CD14-positive monocyte (primary cell): ENCODE measurements at regions of chr6 and their contacts with region 1.

Region 1: DNA sequence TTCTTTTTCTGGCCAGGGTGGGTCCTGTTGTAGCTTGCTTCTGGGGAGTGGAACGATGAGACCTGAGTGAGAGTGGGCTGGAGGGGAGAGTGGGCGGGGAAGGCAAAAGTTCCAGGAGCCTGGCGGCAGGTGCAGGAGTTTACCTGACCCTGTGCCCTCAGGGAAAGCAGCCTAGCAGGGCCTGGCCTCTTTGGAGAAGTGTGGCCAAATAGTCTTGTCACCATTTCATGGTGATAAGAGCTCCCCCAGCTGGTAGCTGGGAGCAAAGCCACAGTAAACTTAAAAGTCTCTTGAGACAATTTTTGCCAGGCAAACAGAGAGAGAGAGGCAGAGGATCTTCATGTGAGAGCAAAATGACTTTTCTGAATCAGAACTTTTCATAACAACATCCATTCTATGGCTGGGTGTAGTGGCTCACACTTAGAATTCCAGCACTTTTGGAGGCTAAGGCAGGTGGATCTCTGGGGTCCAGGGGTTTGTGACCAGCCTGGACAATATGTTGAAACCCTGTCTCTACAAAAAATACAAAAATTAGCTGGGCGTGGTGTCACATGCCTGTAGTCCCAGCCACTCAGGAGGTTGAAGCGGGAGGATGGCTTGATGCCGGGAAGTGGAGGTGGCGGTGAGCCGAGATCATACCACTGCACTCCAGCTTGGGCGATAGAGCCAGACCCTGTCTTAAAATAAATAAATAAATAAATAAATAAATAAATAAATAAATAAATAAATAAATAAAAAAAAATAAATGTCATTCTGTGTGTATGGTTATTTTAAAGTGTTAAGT is 161.8 kb upstream of the SCGN start:
- DNase-seq: peak; percentile 71 to 83 (median 71)
- H3K4me3 ChIP-seq: no peak overlapping the region
- H3K4me3 Mint-ChIP-seq: no peak overlapping the region
- H3K27ac ChIP-seq: no peak overlapping the region
- H3K27ac Mint-ChIP-seq: peak overlapping the region in 5 of 7 donors; percentile 47 to 68 (median 58)
- H3K4me1 ChIP-seq: peaks cover 4 to 8% of the 10 kb centered on the region in 2 donors
- H3K4me1 Mint-ChIP-seq: peaks cover 12% of the 10 kb centered on the region
- H3K27me3 ChIP-seq: no peaks in the 10 kb centered on the region
- H3K27me3 Mint-ChIP-seq: no peaks in the 10 kb centered on the region
- CTCF ChIP-seq: peak; percentile 83

Region 2: DNA sequence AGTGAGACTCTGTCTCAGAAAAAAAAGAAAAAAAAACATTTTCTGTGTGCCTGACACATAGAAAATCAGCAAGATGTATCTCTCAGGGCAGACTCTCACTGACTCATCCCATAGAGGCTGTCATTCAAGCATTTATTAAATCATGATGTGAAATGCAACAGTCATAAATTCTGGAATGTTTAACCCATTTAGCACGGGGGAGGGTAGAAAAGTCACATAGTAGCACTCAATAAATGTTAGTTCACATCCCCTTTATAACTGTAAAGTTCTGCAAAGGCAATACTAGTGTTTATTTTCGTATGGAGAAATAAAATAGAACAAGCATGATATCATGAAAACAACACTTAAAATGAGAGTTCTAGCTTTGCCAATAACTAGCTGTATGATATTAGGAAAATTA is 226.6 kb before region 1 on chr6:
- intact Hi-C with region 1: loop called in 1 of 2 experiments (anchors 2 kb)
- DNase-seq: no peak
- H3K4me3 ChIP-seq: no peak overlapping the region
- H3K4me3 Mint-ChIP-seq: no peak overlapping the region
- H3K27ac ChIP-seq: no peak overlapping the region
- H3K27ac Mint-ChIP-seq: no peak overlapping the region
- H3K4me1 ChIP-seq: peaks cover 0 to 9% of the 10 kb centered on the region in 2 donors
- H3K4me1 Mint-ChIP-seq: peaks cover 1% of the 10 kb centered on the region
- H3K27me3 ChIP-seq: no peaks in the 10 kb centered on the region
- H3K27me3 Mint-ChIP-seq: peaks cover 0 to 2% (median 2%) of the 10 kb centered on the region in 3 donors
- CTCF ChIP-seq: no peak

Region 3: GRCh38 chr6:25270559-25270958 is 219.7 kb before region 1 on chr6:
- intact Hi-C with region 1: loop called (anchors 2 to 5 kb)
- DNase-seq: no peak
- H3K4me3 ChIP-seq: no peak overlapping the region
- H3K4me3 Mint-ChIP-seq: no peak overlapping the region
- H3K27ac ChIP-seq: no peak overlapping the region
- H3K27ac Mint-ChIP-seq: no peak overlapping the region
- H3K4me1 ChIP-seq: peaks cover 0 to 7% of the 10 kb centered on the region in 2 donors
- H3K4me1 Mint-ChIP-seq: peaks cover under 1% of the 10 kb centered on the region
- H3K27me3 ChIP-seq: no peaks in the 10 kb centered on the region
- H3K27me3 Mint-ChIP-seq: peaks cover 2 to 8% (median 4%) of the 10 kb centered on the region in 3 donors
- CTCF ChIP-seq: no peak

Region 4: DNA sequence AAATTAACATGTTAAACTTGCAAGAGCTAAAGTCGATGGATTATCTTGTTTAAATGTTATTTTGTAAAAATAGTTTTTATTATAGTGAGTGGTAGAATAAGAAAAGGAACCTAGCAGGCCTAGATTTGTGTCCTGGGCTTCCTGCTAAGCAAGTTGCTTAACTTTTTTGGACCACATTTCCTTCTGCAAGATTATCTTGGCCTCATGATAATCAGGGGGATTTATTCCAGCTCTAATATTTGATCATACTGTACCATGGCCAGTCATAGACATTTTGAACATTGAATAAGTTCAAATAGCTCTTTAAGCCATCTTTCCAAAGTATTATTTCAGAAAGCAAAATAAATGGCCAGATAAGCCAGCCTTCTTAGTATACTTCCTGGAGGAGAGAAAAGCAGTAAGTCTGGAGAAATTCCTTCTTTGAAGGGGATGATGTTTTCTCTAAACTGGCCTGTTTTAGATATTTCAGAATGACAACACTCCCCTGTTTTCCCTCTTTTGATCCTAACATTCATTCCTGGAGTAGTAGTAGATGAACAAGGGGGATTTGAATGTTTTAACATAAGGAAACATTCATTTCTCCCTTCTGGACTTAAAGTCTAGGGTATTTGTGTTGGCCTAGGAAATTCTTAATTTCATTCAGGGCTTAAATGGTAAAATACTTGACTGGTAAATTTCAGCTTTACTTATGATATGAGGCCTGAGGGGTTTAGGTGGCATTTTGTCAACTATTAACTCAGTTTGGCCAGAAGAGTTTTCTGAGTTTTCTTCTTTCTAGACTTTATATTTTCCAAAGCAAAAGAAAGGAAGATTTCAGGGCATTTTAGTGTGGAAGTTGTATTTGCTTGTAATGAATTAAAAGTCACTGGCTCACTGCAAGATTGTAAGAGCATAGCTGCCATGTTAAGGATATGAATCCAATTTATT is 53.0 kb after region 1 on chr6:
- intact Hi-C with region 1: no loop called
- DNase-seq: no peak
- H3K4me3 ChIP-seq: no peak overlapping the region
- H3K4me3 Mint-ChIP-seq: no peak overlapping the region
- H3K27ac ChIP-seq: no peak overlapping the region
- H3K27ac Mint-ChIP-seq: no peak overlapping the region
- H3K4me1 ChIP-seq: no peaks in the 10 kb centered on the region
- H3K4me1 Mint-ChIP-seq: no peaks in the 10 kb centered on the region
- H3K27me3 ChIP-seq: no peaks in the 10 kb centered on the region
- H3K27me3 Mint-ChIP-seq: no peaks in the 10 kb centered on the region
- CTCF ChIP-seq: no peak